Dendritic cell treated with granulocyte-macrophage colony-stimulating factor and Interleukin-4, amounts not matched to agents 40 ng/mL and 50 ng/mL, for 4 days (primary cell): ENCODE measurements at regions of chr18 and their contacts with region 1.

Region 1: GRCh38 chr18:40708726-40709125 is 1246.3 kb upstream of the PIK3C3 start:
- H3K4me3 Mint-ChIP-seq: no peak overlapping the region
- H3K27ac Mint-ChIP-seq: no peak overlapping the region
- H3K4me1 Mint-ChIP-seq: no peaks in the 10 kb centered on the region
- H3K27me3 Mint-ChIP-seq: no peaks in the 10 kb centered on the region

Region 2: GRCh38 chr18:40769786-40770185 is 61.1 kb after region 1 on chr18:
- intact Hi-C with region 1: loop called (anchors 10 kb)
- H3K4me3 Mint-ChIP-seq: no peak overlapping the region
- H3K27ac Mint-ChIP-seq: no peak overlapping the region
- H3K4me1 Mint-ChIP-seq: no peaks in the 10 kb centered on the region
- H3K27me3 Mint-ChIP-seq: no peaks in the 10 kb centered on the region